RWPE1 (cell line): ENCODE measurements at regions of chr1 and their contacts with region 1.

Region 1: GRCh38 chr1:210239349-210240111 is 6.9 kb downstream of the SERTAD4 start:
- DNase-seq: peak; percentile 67
- H3K27ac ChIP-seq: no peak overlapping the region
- CTCF ChIP-seq: peak; percentile 12; the same call in 1 of the 2 replicates

Region 2: GRCh38 chr1:210254298-210254697 is 14.8 kb after region 1 on chr1:
- CTCF ChIA-PET with region 1: interaction called, 11 read pairs
- POLR2A ChIA-PET with region 1: no interaction called
- DNase-seq: no peak
- H3K27ac ChIP-seq: no peak overlapping the region
- CTCF ChIP-seq: no peak